ENCODE measurements at regions of chr6 and their contacts with region 1.

Region 1: DNA sequence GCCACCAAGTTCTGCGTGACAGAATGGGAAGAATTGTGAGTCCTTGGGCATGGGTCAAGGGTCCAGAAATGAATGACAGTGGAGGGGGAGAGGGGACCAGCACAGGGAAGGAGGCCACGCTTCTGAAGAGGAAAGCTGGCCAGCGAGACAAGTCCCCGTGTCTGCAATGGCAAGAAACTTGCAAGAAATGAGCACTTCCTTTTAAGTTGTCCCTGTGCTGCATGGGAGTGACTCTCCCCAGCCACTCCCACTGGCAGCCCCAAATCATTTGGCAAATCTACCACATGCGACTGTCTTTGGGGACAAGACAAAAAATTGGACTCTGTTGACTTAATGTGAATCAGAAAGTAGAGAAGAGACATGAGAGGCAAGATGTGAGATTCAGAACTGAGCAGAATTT is 242.2 kb upstream of the RREB1 start:
- H3K4me3 Mint-ChIP-seq: no peak overlapping the region
- H3K27ac Mint-ChIP-seq: peak overlapping the region; percentile 77
- H3K4me1 Mint-ChIP-seq: peaks cover 74% of the 10 kb centered on the region
- H3K27me3 Mint-ChIP-seq: no peaks in the 10 kb centered on the region

Region 2: GRCh38 chr6:6918216-6918983 is 52.8 kb after region 1 on chr6:
- intact Hi-C with region 1: loop called (anchors 10 kb)
- H3K4me3 Mint-ChIP-seq: no peak overlapping the region
- H3K27ac Mint-ChIP-seq: peak overlapping the region; percentile 37
- H3K4me1 Mint-ChIP-seq: peaks cover 52% of the 10 kb centered on the region
- H3K27me3 Mint-ChIP-seq: no peaks in the 10 kb centered on the region

Region 3: GRCh38 chr6:7016226-7016625 is 150.6 kb after region 1 on chr6:
- intact Hi-C with region 1: no loop called
- H3K4me3 Mint-ChIP-seq: no peak overlapping the region
- H3K27ac Mint-ChIP-seq: peak overlapping the region; percentile 73
- H3K4me1 Mint-ChIP-seq: peaks cover 43% of the 10 kb centered on the region
- H3K27me3 Mint-ChIP-seq: no peaks in the 10 kb centered on the region